ENCODE measurements at regions of chr2 and their contacts with region 1.

Region 1: GRCh38 chr2:148020111-148021058 is at the start of gene ORC4:
- DNase-seq: peak; percentile 93 to 94
- H3K4me3 ChIP-seq: peak within 1 kb of the TSS; percentile 77
- H3K27ac ChIP-seq: peak within 1 kb of the TSS; percentile 68
- H3K4me1 ChIP-seq: peaks cover 28% of the 10 kb centered on the region
- H3K27me3 ChIP-seq: no peaks in the 10 kb centered on the region
- CTCF ChIP-seq: peak; percentile 36; the same call in 1 of the 2 replicates
- total RNA-seq, gene ORC4: 28.4 and 44.2 TPM in 2 replicates

Region 2: GRCh38 chr2:147614471-147614870 is 405.9 kb before region 1 on chr2:
- CTCF ChIA-PET with region 1: interaction called, 18 read pairs
- POLR2A ChIA-PET with region 1: no interaction called
- intact Hi-C with region 1: no loop called
- DNase-seq: no peak
- H3K4me3 ChIP-seq: no peak overlapping the region
- H3K27ac ChIP-seq: no peak overlapping the region
- H3K4me1 ChIP-seq: no peaks in the 10 kb centered on the region
- H3K27me3 ChIP-seq: no peaks in the 10 kb centered on the region
- CTCF ChIP-seq: no peak

Region 3: DNA sequence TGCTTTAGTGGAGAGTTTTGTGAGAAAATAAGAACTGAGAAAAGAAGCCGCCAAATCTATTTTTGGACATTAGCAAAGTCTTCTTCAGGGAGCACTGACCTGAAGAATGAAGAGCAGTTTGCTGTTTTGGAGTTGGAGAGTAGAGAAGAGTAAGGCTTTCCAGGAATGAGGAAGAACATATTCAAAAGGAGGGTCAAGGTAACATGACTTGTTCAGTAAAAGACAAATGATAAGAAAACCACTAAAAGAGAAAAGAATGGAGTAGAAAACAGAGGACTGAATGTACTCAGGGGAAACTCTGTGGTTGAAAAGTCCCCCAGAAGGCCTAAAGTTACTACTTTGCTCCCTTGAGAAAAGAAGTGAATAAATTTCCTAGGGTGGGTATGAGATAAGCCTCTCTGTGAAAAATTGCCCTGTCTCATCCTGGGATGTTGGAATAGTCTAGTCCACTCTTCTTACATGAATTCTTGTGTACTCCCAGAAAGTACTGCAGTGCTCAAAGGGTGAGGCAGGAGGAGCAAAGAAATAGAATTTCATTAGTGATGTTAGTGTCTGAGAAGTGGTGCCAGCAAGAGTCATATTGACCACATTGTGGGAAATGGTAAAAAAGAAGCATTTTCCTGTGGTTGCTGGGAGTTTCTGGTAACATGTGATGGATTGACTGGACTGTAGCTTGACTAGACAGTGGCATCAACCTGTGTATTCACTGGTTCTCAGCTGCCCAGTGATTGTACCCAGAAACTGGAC is 28.3 kb after region 1 on chr2:
- CTCF ChIA-PET with region 1: no interaction called
- POLR2A ChIA-PET with region 1: interaction called, 27 read pairs
- intact Hi-C with region 1: no loop called
- DNase-seq: no peak
- H3K4me3 ChIP-seq: no peak overlapping the region
- H3K27ac ChIP-seq: no peak overlapping the region
- H3K4me1 ChIP-seq: no peaks in the 10 kb centered on the region
- H3K27me3 ChIP-seq: no peaks in the 10 kb centered on the region
- CTCF ChIP-seq: no peak

Region 4: GRCh38 chr2:148172131-148172753 is 151.9 kb after region 1 on chr2:
- CTCF ChIA-PET with region 1: no interaction called
- POLR2A ChIA-PET with region 1: no interaction called
- intact Hi-C with region 1: no loop called
- DNase-seq: no peak
- H3K4me3 ChIP-seq: no peak overlapping the region
- H3K27ac ChIP-seq: no peak overlapping the region
- H3K4me1 ChIP-seq: no peaks in the 10 kb centered on the region
- H3K27me3 ChIP-seq: no peaks in the 10 kb centered on the region
- CTCF ChIP-seq: no peak

Region 5: GRCh38 chr2:148483666-148484065 is 463.3 kb after region 1 on chr2:
- CTCF ChIA-PET with region 1: no interaction called
- POLR2A ChIA-PET with region 1: interaction called, 12 read pairs
- intact Hi-C with region 1: no loop called
- DNase-seq: no peak
- H3K4me3 ChIP-seq: no peak overlapping the region
- H3K27ac ChIP-seq: no peak overlapping the region
- H3K4me1 ChIP-seq: no peaks in the 10 kb centered on the region
- H3K27me3 ChIP-seq: no peaks in the 10 kb centered on the region
- CTCF ChIP-seq: no peak

Region 6: GRCh38 chr2:148814143-148814859 is 793.9 kb after region 1 on chr2:
- CTCF ChIA-PET with region 1: no interaction called
- POLR2A ChIA-PET with region 1: interaction called, 22 read pairs
- intact Hi-C with region 1: no loop called
- DNase-seq: peak; percentile 31 to 86
- H3K4me3 ChIP-seq: peak overlapping the region; percentile 40; the same call in 1 of the 2 replicates
- H3K27ac ChIP-seq: peak overlapping the region; percentile 81
- H3K4me1 ChIP-seq: peaks cover 21% of the 10 kb centered on the region
- H3K27me3 ChIP-seq: no peaks in the 10 kb centered on the region
- CTCF ChIP-seq: no peak

Measured in PC-9 (cell line).